ENCODE measurements at regions of chr22 and their contacts with region 1.

Region 1: GRCh38 chr22:25465949-25466348 is 98.5 kb upstream of the GRK3 start:
- DNase-seq: no peak
- H3K4me3 ChIP-seq: no peak overlapping the region
- H3K27ac ChIP-seq: no peak overlapping the region
- H3K4me1 ChIP-seq: no peaks in the 10 kb centered on the region
- H3K27me3 ChIP-seq: no peaks in the 10 kb centered on the region
- CTCF ChIP-seq: no peak

Region 2: GRCh38 chr22:25509374-25509791 is 43.4 kb after region 1 on chr22:
- intact Hi-C with region 1: no loop called
- DNase-seq: no peak
- H3K4me3 ChIP-seq: no peak overlapping the region
- H3K27ac ChIP-seq: no peak overlapping the region
- H3K4me1 ChIP-seq: no peaks in the 10 kb centered on the region
- H3K27me3 ChIP-seq: no peaks in the 10 kb centered on the region
- CTCF ChIP-seq: no peak

Region 3: GRCh38 chr22:25702040-25702439 is 236.1 kb after region 1 on chr22:
- intact Hi-C with region 1: loop called (anchors 5 kb)
- DNase-seq: no peak
- H3K4me3 ChIP-seq: no peak overlapping the region
- H3K27ac ChIP-seq: no peak overlapping the region
- H3K4me1 ChIP-seq: peaks cover 37% of the 10 kb centered on the region
- H3K27me3 ChIP-seq: no peaks in the 10 kb centered on the region
- CTCF ChIP-seq: peak; percentile 59

Region 4: GRCh38 chr22:25777870-25778269 is 311.9 kb after region 1 on chr22:
- intact Hi-C with region 1: loop called (anchors 10 kb)
- DNase-seq: no peak
- H3K4me3 ChIP-seq: no peak overlapping the region
- H3K27ac ChIP-seq: no peak overlapping the region
- H3K4me1 ChIP-seq: no peaks in the 10 kb centered on the region
- H3K27me3 ChIP-seq: peaks cover 10% of the 10 kb centered on the region
- CTCF ChIP-seq: no peak